Activated naive CD4-positive, alpha-beta T cell treated with anti-CD3 and anti-CD28 coated beads for 36 hours (primary cell): ENCODE measurements at regions of chrX and their contacts with region 1.

Region 1: DNA sequence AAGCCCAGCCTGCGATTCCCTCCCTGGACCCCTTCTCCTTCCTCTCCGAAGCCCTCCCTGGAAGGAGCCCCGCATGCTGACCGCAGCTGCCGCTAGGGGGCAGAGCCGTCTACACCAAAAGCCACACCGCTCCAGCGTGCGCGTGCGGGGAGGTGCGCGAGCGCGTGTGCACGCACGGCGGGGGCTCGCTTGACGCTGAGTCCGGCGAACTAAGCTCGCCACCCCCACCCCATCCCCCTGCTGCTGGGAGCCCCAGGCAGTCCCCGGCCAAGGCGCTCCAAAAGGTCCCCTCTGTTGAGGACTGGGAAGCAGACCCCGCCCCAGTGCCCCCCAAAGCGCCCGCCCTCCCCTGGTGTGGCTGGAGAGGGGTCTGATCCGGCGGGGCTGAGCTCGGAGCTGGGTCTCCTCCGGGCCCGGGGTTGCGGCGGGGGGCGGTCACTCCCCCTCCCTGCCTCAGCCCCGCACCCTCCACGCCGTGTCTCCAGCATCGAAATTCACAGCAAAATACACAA is 11.0 kb upstream of the CCNQ start:
- DNase-seq: peak; percentile 78
- H3K4me3 Mint-ChIP-seq: peak overlapping the region; percentile 63
- H3K27ac Mint-ChIP-seq: no peak overlapping the region
- H3K4me1 Mint-ChIP-seq: peaks cover 6% of the 10 kb centered on the region
- H3K27me3 Mint-ChIP-seq: no peaks in the 10 kb centered on the region

Region 2: GRCh38 chrX:153649178-153649914 is 39.4 kb after region 1 on chrX:
- CTCF ChIA-PET with region 1: interaction called, 6 read pairs
- intact Hi-C with region 1: loop called (anchors 1 kb)
- DNase-seq: peak; percentile 49
- H3K4me3 Mint-ChIP-seq: no peak overlapping the region
- H3K27ac Mint-ChIP-seq: no peak overlapping the region
- H3K4me1 Mint-ChIP-seq: peaks cover 2% of the 10 kb centered on the region
- H3K27me3 Mint-ChIP-seq: peaks cover 24% of the 10 kb centered on the region

Region 3: GRCh38 chrX:153662266-153662665 is 52.3 kb after region 1 on chrX:
- CTCF ChIA-PET with region 1: interaction called, 25 read pairs
- intact Hi-C with region 1: loop called (anchors 1 kb)
- DNase-seq: peak; percentile 69
- H3K4me3 Mint-ChIP-seq: peak overlapping the region; percentile 57
- H3K27ac Mint-ChIP-seq: no peak overlapping the region
- H3K4me1 Mint-ChIP-seq: no peaks in the 10 kb centered on the region
- H3K27me3 Mint-ChIP-seq: peaks cover 9% of the 10 kb centered on the region

Region 4: DNA sequence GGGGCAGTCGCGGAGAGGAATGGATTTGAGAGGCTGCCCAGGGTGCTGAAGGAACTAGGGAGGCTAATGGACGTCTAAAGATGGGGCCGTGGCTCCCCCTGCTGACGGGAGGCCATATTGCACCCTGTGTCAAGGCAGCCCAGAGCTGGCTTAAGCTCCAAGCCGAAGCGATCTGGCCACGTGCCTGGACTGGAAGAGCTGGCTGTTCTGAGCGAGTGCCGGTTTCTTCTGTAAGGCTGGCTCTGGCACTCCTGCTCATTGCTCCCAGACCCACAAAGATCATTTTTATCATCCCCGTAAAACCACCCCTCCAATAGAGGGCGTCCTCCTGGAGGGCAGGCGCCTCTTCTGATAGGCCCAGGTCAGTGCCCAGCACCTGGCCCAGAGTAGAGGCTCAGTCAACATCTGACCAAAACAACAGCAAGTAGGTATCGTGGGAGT is 58.0 kb after region 1 on chrX:
- CTCF ChIA-PET with region 1: interaction called, 25 read pairs
- intact Hi-C with region 1: loop called (anchors 2 kb)
- DNase-seq: peak; percentile 86
- H3K4me3 Mint-ChIP-seq: peak overlapping the region; percentile 70
- H3K27ac Mint-ChIP-seq: no peak overlapping the region
- H3K4me1 Mint-ChIP-seq: peaks cover 8% of the 10 kb centered on the region
- H3K27me3 Mint-ChIP-seq: peaks cover 8% of the 10 kb centered on the region